ENCODE measurements at regions of chr10 and their contacts with region 1.

Region 1: GRCh38 chr10:25016376-25017154 is at the start of gene THNSL1:
- DNase-seq: peak; percentile 99
- H3K4me3 Mint-ChIP-seq: peak within 1 kb of the TSS; percentile 88
- H3K27ac Mint-ChIP-seq: peak within 1 kb of the TSS; percentile 98
- H3K4me1 Mint-ChIP-seq: peaks cover 16% of the 10 kb centered on the region
- H3K27me3 Mint-ChIP-seq: peaks cover 12% of the 10 kb centered on the region
- total RNA-seq, gene THNSL1: 3.6 and 4.2 TPM in 2 replicates

Region 2: GRCh38 chr10:23095404-23095965 is 1921.1 kb before region 1 on chr10 and contains the start of gene MSRB2:
- intact Hi-C with region 1: loop called (anchors 10 kb)
- DNase-seq: peak; percentile 90
- H3K4me3 Mint-ChIP-seq: peak within 1 kb of the TSS; percentile 89
- H3K27ac Mint-ChIP-seq: peak within 1 kb of the TSS; percentile 93
- H3K4me1 Mint-ChIP-seq: peaks cover 40% of the 10 kb centered on the region
- H3K27me3 Mint-ChIP-seq: peaks cover 18% of the 10 kb centered on the region
- total RNA-seq, gene MSRB2: 3.3 and 3.9 TPM in 2 replicates

Region 3: GRCh38 chr10:23438550-23439441 is 1577.8 kb before region 1 on chr10 and contains the start of gene OTUD1:
- intact Hi-C with region 1: loop called (anchors 5 kb)
- DNase-seq: peak; percentile 99
- H3K4me3 Mint-ChIP-seq: peak within 1 kb of the TSS; percentile 96
- H3K27ac Mint-ChIP-seq: peak within 1 kb of the TSS; percentile 86
- H3K4me1 Mint-ChIP-seq: peaks cover 39% of the 10 kb centered on the region
- H3K27me3 Mint-ChIP-seq: no peaks in the 10 kb centered on the region
- total RNA-seq, gene OTUD1: 12.6 and 12.8 TPM in 2 replicates

Region 4: DNA sequence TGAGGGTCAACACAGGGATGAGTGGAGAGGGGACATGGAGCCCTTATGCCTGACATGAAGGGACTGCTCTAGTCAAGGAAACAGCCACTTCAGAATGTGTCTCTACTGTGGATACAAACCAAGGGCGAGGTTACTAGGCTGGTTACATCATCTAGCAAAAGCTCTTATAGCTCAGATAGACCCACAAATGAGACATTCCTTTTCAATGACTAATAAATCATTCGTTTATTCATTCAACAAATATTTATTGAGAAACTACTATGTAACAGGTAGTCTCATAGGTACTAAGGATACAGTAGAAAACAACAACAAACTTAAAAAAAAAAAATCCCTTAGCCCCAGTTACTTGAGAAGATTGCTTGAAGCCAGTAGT is 588.2 kb before region 1 on chr10:
- intact Hi-C with region 1: no loop called
- DNase-seq: no peak
- H3K4me3 Mint-ChIP-seq: no peak overlapping the region
- H3K27ac Mint-ChIP-seq: no peak overlapping the region
- H3K4me1 Mint-ChIP-seq: no peaks in the 10 kb centered on the region
- H3K27me3 Mint-ChIP-seq: peaks cover 6% of the 10 kb centered on the region

Region 5: DNA sequence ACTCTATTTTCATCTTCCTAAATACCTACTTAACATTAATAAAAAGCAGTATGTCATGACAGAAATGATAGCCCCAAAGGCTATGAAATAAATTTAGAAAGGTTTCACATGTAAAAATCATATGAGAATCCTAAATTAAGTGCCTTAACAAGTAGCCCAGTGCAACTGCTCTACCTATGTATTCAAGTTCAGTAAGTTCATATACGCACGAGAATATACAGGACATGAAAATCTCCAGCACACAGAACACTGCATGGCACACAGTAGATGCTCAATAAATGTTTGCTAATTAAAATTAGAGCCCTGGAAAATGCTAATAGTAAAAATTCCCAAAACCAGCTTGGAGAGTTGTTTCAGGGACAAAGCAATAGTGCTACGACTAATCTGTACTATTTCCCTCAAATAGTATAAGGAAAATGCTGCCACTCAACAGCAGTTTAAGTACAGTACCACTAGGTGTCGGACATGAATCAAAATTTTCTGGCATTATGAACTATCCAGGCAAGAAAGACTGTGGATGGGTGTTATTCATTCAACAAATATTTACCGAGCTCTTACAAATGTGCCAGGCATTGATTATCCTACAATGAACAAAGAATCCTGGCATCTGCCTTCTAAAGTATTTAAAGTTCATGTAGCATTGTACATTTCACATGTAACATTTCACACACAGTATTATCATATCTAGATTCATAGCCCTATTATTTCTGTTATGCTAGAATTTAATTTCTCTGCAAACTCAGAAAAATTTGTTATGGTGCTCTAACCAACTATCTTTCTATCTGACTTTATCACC is 373.7 kb before region 1 on chr10:
- intact Hi-C with region 1: loop called (anchors 1 kb)
- DNase-seq: peak; percentile 79
- H3K4me3 Mint-ChIP-seq: no peak overlapping the region
- H3K27ac Mint-ChIP-seq: no peak overlapping the region
- H3K4me1 Mint-ChIP-seq: peaks cover 3% of the 10 kb centered on the region
- H3K27me3 Mint-ChIP-seq: no peaks in the 10 kb centered on the region

Region 6: DNA sequence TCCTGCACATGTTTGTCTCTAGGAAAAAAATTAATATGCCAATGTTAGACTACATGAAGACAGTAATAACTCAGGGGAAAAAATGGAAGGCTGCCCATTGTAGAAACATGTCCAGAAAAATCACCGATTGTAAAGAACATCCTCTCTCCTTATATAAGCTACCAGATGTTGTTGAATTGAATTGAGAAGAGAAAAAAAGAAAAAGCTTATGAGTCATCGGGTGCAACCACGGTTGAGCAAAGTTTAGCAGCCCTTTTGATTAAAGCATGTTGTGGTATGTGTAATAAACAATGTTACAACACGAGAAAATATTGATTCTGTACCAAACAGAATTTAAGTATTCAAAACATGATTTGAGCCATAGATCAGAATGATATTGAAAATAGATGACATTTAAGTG is 190.5 kb before region 1 on chr10:
- intact Hi-C with region 1: loop called (anchors 5 kb)
- DNase-seq: no peak
- H3K4me3 Mint-ChIP-seq: peak overlapping the region; percentile 60
- H3K27ac Mint-ChIP-seq: no peak overlapping the region
- H3K4me1 Mint-ChIP-seq: peaks cover 31% of the 10 kb centered on the region
- H3K27me3 Mint-ChIP-seq: no peaks in the 10 kb centered on the region

Region 7: GRCh38 chr10:24920907-24921881 is 95.4 kb before region 1 on chr10:
- intact Hi-C with region 1: loop called (anchors 1 kb)
- DNase-seq: peak; percentile 77
- H3K4me3 Mint-ChIP-seq: peak overlapping the region; percentile 55
- H3K27ac Mint-ChIP-seq: peak overlapping the region; percentile 93
- H3K4me1 Mint-ChIP-seq: peaks cover 23% of the 10 kb centered on the region
- H3K27me3 Mint-ChIP-seq: no peaks in the 10 kb centered on the region

Region 8: GRCh38 chr10:25059764-25060389 is 43.3 kb after region 1 on chr10:
- intact Hi-C with region 1: loop called (anchors 1 kb)
- DNase-seq: no peak
- H3K4me3 Mint-ChIP-seq: no peak overlapping the region
- H3K27ac Mint-ChIP-seq: no peak overlapping the region
- H3K4me1 Mint-ChIP-seq: peaks cover 22% of the 10 kb centered on the region
- H3K27me3 Mint-ChIP-seq: peaks cover 3% of the 10 kb centered on the region